ENCODE measurements at regions of chr17 and their contacts with region 1.

Region 1: DNA sequence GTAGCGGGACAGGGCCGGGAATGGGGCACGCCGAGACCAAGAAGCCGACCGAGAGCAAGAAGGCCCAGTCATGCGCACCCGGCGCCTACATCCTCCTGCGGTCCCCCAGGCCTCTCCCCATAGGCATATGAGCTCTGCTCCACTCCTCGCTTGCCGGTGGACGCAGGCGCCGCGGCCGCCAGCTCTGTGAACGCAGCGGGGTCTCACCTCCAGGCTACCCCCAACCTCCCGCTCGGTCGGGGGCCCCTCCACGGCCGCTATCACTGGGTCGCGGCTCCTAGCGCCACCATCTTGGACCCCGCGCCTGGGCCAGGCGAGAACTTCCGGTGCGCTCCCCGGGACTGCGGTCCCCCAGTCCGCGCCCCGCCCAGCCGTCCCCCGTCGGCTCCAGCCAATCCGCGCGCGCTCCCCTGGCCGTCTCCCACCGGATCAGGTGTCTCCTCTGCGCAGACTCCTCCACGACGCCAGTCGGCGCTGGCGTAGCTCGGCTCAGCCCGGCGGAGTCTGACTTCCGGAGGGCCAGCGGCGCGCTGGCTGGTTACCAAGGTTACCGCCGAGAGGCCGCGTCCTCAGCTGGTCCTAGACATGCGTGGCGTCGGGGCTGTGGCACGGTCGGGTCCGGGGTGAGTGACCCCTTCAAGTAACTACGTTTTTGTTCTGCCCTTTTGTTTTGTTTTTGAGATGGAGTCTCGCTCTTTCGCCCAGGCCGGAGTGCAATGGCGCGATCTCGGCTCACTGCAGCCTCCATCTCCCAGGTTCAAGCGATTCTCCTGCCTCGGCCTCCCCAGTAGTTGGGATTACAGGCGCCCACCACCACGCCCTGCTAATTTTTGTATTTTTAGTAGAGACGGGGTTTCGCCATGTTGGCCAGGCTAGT is at the start of gene ZNF594:
- DNase-seq: peak; percentile 91
- H3K4me3 ChIP-seq: peak within 1 kb of the TSS; percentile 54 to 92 (median 72)
- H3K4me3 Mint-ChIP-seq: peak within 1 kb of the TSS; percentile 85 to 92
- H3K27ac ChIP-seq: peak within 1 kb of the TSS; percentile 37 to 75
- H3K27ac Mint-ChIP-seq: peak within 1 kb of the TSS; percentile 33 to 91 (median 82)
- H3K4me1 ChIP-seq: peaks cover 12 to 17% of the 10 kb centered on the region in 2 donors
- H3K4me1 Mint-ChIP-seq: peaks cover 14% of the 10 kb centered on the region
- H3K27me3 ChIP-seq: no peaks in the 10 kb centered on the region
- H3K27me3 Mint-ChIP-seq: no peaks in the 10 kb centered on the region
- CTCF ChIP-seq: peak; percentile 81
- polyA plus RNA-seq, gene ZNF594: 0.34 to 1.0 TPM in 2 of 3 donors, not detected in the other

Region 2: DNA sequence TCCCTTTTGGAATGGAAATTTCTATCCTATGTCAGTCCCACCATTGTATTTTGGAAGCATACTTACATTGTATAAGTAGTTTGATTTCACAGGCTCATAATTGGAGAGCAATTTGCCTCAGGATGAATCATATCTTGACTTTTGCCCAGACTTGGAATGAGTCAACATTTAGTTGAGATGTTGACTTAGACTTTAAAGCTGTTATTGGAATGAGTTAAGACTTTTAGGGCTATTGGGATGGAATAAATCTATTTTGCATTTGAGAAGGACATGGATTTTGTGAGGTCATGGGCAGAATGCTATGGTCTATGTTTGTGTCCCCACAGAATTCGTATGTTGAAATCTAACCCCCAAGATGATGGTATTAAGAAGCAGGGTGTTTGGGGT is 12.1 kb after region 1 on chr17:
- intact Hi-C with region 1: no loop called
- DNase-seq: no peak
- H3K4me3 ChIP-seq: no peak overlapping the region
- H3K4me3 Mint-ChIP-seq: no peak overlapping the region
- H3K27ac ChIP-seq: no peak overlapping the region
- H3K27ac Mint-ChIP-seq: no peak overlapping the region
- H3K4me1 ChIP-seq: no peaks in the 10 kb centered on the region
- H3K4me1 Mint-ChIP-seq: peaks cover 3% of the 10 kb centered on the region
- H3K27me3 ChIP-seq: no peaks in the 10 kb centered on the region
- H3K27me3 Mint-ChIP-seq: peaks cover 0 to 3% (median 2%) of the 10 kb centered on the region in 3 donors
- CTCF ChIP-seq: no peak

Region 3: DNA sequence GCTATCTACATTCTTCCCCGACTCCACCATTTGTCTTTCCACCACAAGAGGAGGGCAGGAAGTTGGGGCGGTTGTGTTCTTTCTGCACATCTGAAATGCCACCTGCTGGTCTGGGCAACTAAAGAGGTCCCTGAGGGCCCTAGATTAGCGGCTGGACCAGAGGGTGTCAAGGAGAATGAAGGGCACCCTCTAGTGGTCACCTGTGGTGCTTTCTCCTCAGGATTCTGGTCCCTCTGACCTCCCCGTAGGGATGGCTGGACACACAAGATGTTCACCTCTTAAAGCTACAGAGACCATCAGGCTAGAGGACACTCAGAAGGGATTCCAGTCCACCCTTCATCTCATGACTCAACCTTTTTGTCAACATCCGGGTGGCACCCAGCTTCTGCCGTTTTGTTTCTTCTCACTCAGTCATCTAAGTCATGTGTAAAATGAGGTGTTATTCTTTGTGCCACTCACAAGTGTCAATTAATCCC is 45.8 kb after region 1 on chr17:
- intact Hi-C with region 1: loop called (anchors 2 kb)
- DNase-seq: peak; percentile 72 to 86 (median 74)
- H3K4me3 ChIP-seq: peak overlapping the region in 1 of 3 experiments; percentile 24
- H3K4me3 Mint-ChIP-seq: peak overlapping the region in 1 of 2 donors; percentile 79
- H3K27ac ChIP-seq: no peak overlapping the region
- H3K27ac Mint-ChIP-seq: peak overlapping the region; percentile 41 to 88 (median 73)
- H3K4me1 ChIP-seq: peaks cover 49 to 50% of the 10 kb centered on the region in 2 donors
- H3K4me1 Mint-ChIP-seq: peaks cover 46% of the 10 kb centered on the region
- H3K27me3 ChIP-seq: no peaks in the 10 kb centered on the region
- H3K27me3 Mint-ChIP-seq: peaks cover 2 to 4% (median 2%) of the 10 kb centered on the region in 3 donors
- CTCF ChIP-seq: peak; percentile 90